PC-9 (cell line): ENCODE measurements at regions of chr6 and their contacts with region 1.

Region 1: DNA sequence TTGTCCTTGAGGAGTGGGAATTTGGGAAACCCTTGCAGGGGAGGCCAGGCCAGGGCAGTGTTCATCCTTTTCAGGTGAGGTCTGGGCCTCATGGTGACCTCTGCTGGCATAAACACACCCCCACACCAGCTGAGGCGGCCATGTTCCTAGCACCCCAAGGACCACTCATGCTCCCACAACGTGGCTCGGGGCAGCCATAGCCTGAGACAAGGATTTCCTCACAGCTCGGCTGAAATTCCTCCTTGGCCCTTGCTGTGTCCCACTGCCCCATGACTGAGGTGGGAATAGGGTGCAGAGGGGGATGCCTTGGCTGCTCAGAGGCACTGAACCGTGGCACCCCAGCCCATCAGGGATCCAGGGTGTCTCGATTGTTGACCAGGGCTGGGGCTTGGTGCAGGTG is 27.3 kb upstream of the SPDEF start:
- DNase-seq: no peak
- H3K4me3 ChIP-seq: no peak overlapping the region
- H3K27ac ChIP-seq: no peak overlapping the region
- H3K4me1 ChIP-seq: peaks cover 31% of the 10 kb centered on the region
- H3K27me3 ChIP-seq: no peaks in the 10 kb centered on the region
- CTCF ChIP-seq: no peak

Region 2: GRCh38 chr6:34341481-34341971 is 241.9 kb before region 1 on chr6:
- CTCF ChIA-PET with region 1: no interaction called
- POLR2A ChIA-PET with region 1: no interaction called
- intact Hi-C with region 1: no loop called
- DNase-seq: no peak
- H3K4me3 ChIP-seq: no peak overlapping the region
- H3K27ac ChIP-seq: no peak overlapping the region
- H3K4me1 ChIP-seq: peaks cover 32% of the 10 kb centered on the region
- H3K27me3 ChIP-seq: no peaks in the 10 kb centered on the region
- CTCF ChIP-seq: no peak

Region 3: DNA sequence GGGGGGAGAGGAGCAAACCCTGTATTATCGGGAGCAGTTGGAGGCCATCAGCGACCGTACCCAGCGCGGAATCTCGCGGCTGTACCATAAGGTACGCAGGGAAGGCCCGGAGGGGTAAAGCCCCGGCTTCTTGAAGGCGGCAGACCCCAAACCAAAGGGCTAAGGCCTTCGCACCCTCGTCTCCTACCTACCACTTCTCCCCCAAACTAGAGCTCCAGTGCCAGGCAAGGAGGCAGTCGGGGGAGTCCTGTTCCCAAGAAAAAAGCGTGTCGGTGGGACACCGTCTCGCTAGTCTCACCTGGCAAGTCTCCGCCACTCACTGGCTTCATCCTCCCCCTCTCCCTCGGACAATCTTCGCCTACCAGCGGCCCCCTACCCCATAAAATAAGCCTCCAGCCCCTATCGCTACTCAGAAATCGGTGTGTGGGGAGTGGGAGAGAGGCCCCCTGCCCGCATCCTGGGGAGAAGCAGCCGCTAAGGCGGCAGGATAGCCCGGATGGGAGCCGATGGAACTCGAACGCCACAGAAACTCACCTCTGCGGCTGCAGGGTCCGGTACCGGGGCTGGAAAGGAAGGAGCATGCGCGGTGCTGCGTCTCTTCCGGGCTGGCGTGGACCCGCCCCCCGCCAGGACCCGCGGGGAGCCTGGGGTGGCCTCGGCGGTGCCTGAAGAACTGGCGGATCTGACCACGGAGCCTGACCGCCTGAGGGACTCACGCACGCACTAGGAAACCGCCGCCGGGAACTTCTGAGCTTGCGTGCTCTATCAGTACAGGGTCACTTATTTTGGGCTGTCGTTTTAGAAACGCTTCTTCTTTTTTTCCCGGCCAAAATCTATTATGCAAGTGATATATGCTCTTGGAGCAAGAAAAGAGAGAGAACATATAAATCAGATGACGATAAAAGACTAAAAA is 157.7 kb before region 1 on chr6 and contains the start of gene RPS10:
- CTCF ChIA-PET with region 1: no interaction called
- POLR2A ChIA-PET with region 1: interaction called, 11 read pairs
- intact Hi-C with region 1: no loop called
- DNase-seq: peak; percentile 68 to 94
- H3K4me3 ChIP-seq: peak within 1 kb of the TSS; percentile 94
- H3K27ac ChIP-seq: peak within 1 kb of the TSS; percentile 88
- H3K4me1 ChIP-seq: peaks cover 26% of the 10 kb centered on the region; the same call in 1 of the 2 replicates
- H3K27me3 ChIP-seq: no peaks in the 10 kb centered on the region
- CTCF ChIP-seq: no peak
- total RNA-seq, gene RPS10: 1,786 and 2,008 TPM in 2 replicates